ENCODE measurements at regions of chr14 and their contacts with region 1.

Region 1: GRCh38 chr14:60091550-60092530 is at the start of gene PCNX4:
- DNase-seq: peak; percentile 99
- ATAC-seq: peak; percentile 90
- H3K4me3 ChIP-seq: peak within 1 kb of the TSS; percentile 72 to 93 (median 86)
- H3K4me3 Mint-ChIP-seq: peak within 1 kb of the TSS; percentile 94
- H3K27ac ChIP-seq: peak within 1 kb of the TSS; percentile 95 to 97
- H3K27ac Mint-ChIP-seq: peak within 1 kb of the TSS; percentile 98
- H3K4me1 ChIP-seq: peaks cover 19 to 21% of the 10 kb centered on the region in 2 donors
- H3K4me1 Mint-ChIP-seq: peaks cover 41% of the 10 kb centered on the region
- H3K27me3 ChIP-seq: peaks cover 0 to 4% (median 0%) of the 10 kb centered on the region in 4 experiments
- H3K27me3 Mint-ChIP-seq: no peaks in the 10 kb centered on the region
- CTCF ChIP-seq: no peak
- total RNA-seq, gene PCNX4: 53.4 and 70.1 TPM in 2 replicates

Region 2: DNA sequence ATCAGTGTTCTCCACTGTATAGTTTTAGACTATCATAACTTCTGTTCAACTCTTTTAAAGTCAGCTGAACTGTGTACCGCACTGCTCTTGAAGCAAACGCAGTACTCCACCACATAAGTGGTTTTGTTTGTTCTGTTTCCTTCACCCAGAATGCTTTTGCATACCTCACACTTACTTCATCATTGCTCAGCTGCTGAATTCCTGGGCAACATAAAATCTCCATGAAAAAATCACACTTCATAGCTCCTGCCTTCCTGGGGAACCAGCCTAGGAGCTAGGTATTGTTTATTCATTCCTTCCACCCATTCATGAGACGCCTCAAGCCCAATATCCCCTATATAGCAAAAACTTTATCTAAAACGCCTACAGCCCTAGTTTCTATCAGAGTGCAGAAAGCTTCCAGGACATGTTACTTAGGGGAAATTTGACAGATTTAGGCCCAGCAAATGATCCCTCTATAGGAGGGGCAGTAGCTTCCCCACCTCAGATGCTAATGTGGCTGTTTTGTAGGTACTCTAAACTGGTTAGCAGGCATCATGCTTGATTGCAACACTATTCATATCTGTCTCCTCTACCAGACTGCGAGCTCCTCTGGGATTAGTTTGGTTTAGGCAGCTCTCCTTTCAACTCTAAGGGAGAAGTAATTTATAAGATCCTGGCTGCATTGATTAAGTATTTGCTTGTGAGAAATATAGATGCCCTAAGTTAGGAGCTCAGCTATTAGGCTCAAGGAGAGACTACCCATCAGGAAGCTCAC is 127.4 kb before region 1 on chr14:
- CTCF ChIA-PET with region 1: interaction called, 10 read pairs
- POLR2A ChIA-PET with region 1: no interaction called
- intact Hi-C with region 1: loop called (anchors 1 kb)
- DNase-seq: no peak
- ATAC-seq: peak; percentile 11
- H3K4me3 ChIP-seq: peak overlapping the region in 3 of 5 experiments; percentile 18 to 63 (median 55)
- H3K4me3 Mint-ChIP-seq: peak overlapping the region; percentile 86
- H3K27ac ChIP-seq: peak overlapping the region; percentile 86
- H3K27ac Mint-ChIP-seq: peak overlapping the region; percentile 88
- H3K4me1 ChIP-seq: peaks cover 10 to 15% of the 10 kb centered on the region in 2 donors
- H3K4me1 Mint-ChIP-seq: peaks cover 13% of the 10 kb centered on the region
- H3K27me3 ChIP-seq: no peaks in the 10 kb centered on the region
- H3K27me3 Mint-ChIP-seq: no peaks in the 10 kb centered on the region
- CTCF ChIP-seq: no peak

Region 3: GRCh38 chr14:60164712-60165546 is 73.1 kb after region 1 on chr14 and contains the start of gene DHRS7:
- CTCF ChIA-PET with region 1: interaction called, 3 read pairs
- POLR2A ChIA-PET with region 1: interaction called, 8 read pairs
- intact Hi-C with region 1: loop called (anchors 1 kb)
- DNase-seq: peak; percentile 84
- ATAC-seq: peak; percentile 91
- H3K4me3 ChIP-seq: peak within 1 kb of the TSS; percentile 81 to 93 (median 87)
- H3K4me3 Mint-ChIP-seq: peak within 1 kb of the TSS; percentile 95
- H3K27ac ChIP-seq: peak within 1 kb of the TSS; percentile 87 to 93
- H3K27ac Mint-ChIP-seq: peak within 1 kb of the TSS; percentile 99
- H3K4me1 ChIP-seq: peaks cover 20 to 21% of the 10 kb centered on the region in 2 donors
- H3K4me1 Mint-ChIP-seq: peaks cover 43% of the 10 kb centered on the region
- H3K27me3 ChIP-seq: no peaks in the 10 kb centered on the region
- H3K27me3 Mint-ChIP-seq: no peaks in the 10 kb centered on the region
- CTCF ChIP-seq: peak; percentile 11
- total RNA-seq, gene DHRS7: 44.7 and 47.5 TPM in 2 replicates

Region 4: GRCh38 chr14:60724137-60724619 is 632.3 kb after region 1 on chr14 and contains the start of gene SIX4:
- CTCF ChIA-PET with region 1: no interaction called
- POLR2A ChIA-PET with region 1: no interaction called
- intact Hi-C with region 1: loop called (anchors 10 kb)
- DNase-seq: peak; percentile 53
- ATAC-seq: peak; percentile 21
- H3K4me3 ChIP-seq: peak within 1 kb of the TSS; percentile 46 to 87 (median 56)
- H3K4me3 Mint-ChIP-seq: peak within 1 kb of the TSS; percentile 94
- H3K27ac ChIP-seq: no peak within 1 kb of the TSS
- H3K27ac Mint-ChIP-seq: no peak within 1 kb of the TSS
- H3K4me1 ChIP-seq: peaks cover 32 to 35% of the 10 kb centered on the region in 2 donors
- H3K4me1 Mint-ChIP-seq: peaks cover 22% of the 10 kb centered on the region
- H3K27me3 ChIP-seq: peaks cover 0 to 79% (median 65%) of the 10 kb centered on the region in 4 experiments
- H3K27me3 Mint-ChIP-seq: peaks cover 75% of the 10 kb centered on the region
- CTCF ChIP-seq: no peak
- total RNA-seq, gene SIX4: not detected in 2 replicates

Region 5: GRCh38 chr14:61694830-61695694 is 1603.2 kb after region 1 on chr14 and contains the start of gene HIF1A:
- CTCF ChIA-PET with region 1: no interaction called
- POLR2A ChIA-PET with region 1: no interaction called
- intact Hi-C with region 1: loop called (anchors 5 kb)
- DNase-seq: peak; percentile 99
- ATAC-seq: peak; percentile 94
- H3K4me3 ChIP-seq: peak within 1 kb of the TSS; percentile 92 to 98 (median 94)
- H3K4me3 Mint-ChIP-seq: peak within 1 kb of the TSS; percentile 97
- H3K27ac ChIP-seq: peak within 1 kb of the TSS; percentile 92 to 94
- H3K27ac Mint-ChIP-seq: peak within 1 kb of the TSS; percentile 97
- H3K4me1 ChIP-seq: peaks cover 20 to 35% of the 10 kb centered on the region in 2 donors
- H3K4me1 Mint-ChIP-seq: peaks cover 35% of the 10 kb centered on the region
- H3K27me3 ChIP-seq: no peaks in the 10 kb centered on the region
- H3K27me3 Mint-ChIP-seq: no peaks in the 10 kb centered on the region
- CTCF ChIP-seq: no peak
- total RNA-seq, gene HIF1A: 261 and 264 TPM in 2 replicates